Upper lobe of right lung (tissue), 1 donor: ENCODE measurements at regions of chr15 and their contacts with region 1.

Region 1: GRCh38 chr15:32669896-32670619 is 28.5 kb downstream of the SCG5 start:
- DNase-seq: no peak
- ATAC-seq: no peak
- H3K4me3 ChIP-seq: no peak overlapping the region
- H3K27ac ChIP-seq: no peak overlapping the region
- H3K4me1 ChIP-seq: no peaks in the 10 kb centered on the region
- H3K27me3 ChIP-seq: no peaks in the 10 kb centered on the region
- CTCF ChIP-seq: no peak

Region 2: DNA sequence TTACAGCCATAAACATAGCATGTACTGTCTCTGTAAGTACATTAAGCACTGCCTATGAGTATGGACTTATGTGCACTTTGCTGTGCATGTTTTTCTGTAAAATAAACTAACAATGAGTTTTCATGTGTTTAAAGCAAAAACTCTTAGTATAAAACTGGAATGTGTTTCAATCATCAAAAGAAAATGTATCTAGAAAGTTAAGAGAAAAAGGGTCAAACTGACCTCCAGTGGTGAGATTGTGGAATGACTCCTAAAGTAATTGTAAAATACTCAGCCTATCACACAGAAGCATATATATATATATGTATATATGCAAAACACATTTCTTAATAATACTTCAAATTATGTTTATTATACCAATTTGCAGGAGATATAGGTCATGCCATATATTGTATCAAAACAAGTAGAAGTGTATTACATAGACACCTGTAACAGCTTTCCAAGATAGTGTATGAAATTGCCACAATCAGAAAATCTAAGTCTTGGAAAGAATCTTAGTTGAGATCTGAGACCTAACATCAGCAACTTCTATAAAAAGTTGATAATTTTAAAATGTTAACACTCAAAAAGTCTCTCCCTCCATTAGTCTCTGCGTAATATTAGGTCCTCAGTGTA is 324.9 kb after region 1 on chr15:
- intact Hi-C with region 1: loop called (anchors 5 kb)
- DNase-seq: no peak
- ATAC-seq: no peak
- H3K4me3 ChIP-seq: no peak overlapping the region
- H3K27ac ChIP-seq: no peak overlapping the region
- H3K4me1 ChIP-seq: no peaks in the 10 kb centered on the region
- H3K27me3 ChIP-seq: no peaks in the 10 kb centered on the region
- CTCF ChIP-seq: peak; percentile 57

Region 3: DNA sequence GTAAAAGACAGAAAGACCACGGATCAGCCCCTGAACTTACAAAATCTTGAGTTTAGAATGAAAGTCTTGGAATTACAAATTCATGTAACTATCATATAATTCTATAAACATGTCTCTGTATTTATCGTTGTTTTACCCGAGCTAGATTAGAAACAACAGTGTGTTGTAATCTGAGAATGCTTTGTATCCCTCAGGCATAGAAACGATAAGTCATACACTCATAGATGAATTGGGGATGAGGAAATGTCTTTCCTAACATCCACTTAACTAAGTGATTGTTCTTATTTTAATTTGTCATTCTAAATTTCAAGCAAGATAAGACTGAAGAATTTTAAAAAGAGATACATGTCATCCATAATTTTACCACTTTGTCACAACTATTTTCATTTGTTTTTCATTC is 806.0 kb after region 1 on chr15:
- intact Hi-C with region 1: no loop called
- DNase-seq: no peak
- ATAC-seq: no peak
- H3K4me3 ChIP-seq: no peak overlapping the region
- H3K27ac ChIP-seq: no peak overlapping the region
- H3K4me1 ChIP-seq: no peaks in the 10 kb centered on the region
- H3K27me3 ChIP-seq: no peaks in the 10 kb centered on the region
- CTCF ChIP-seq: no peak